H1 (cell line): ENCODE measurements at regions of chr1 and their contacts with region 1.

Region 1: GRCh38 chr1:17520071-17520813 is 19.3 kb upstream of the ARHGEF10L start:
- DNase-seq: no peak
- H3K4me3 ChIP-seq: no peak overlapping the region
- H3K27ac ChIP-seq: no peak overlapping the region
- H3K4me1 ChIP-seq: peaks cover 6 to 33% (median 23%) of the 10 kb centered on the region in 4 experiments
- H3K27me3 ChIP-seq: no peaks in the 10 kb centered on the region
- CTCF ChIP-seq: no peak
- EP300 ChIP-seq: no peak
- POLR2A ChIP-seq: no peak
- RAD21 ChIP-seq: no peak

Region 2: GRCh38 chr1:17507916-17508315 is 12.3 kb before region 1 on chr1:
- CTCF ChIA-PET with region 1: interaction called, 58 read pairs
- POLR2A ChIA-PET with region 1: interaction called, 4 read pairs
- DNase-seq: no peak
- H3K4me3 ChIP-seq: no peak overlapping the region
- H3K27ac ChIP-seq: no peak overlapping the region
- H3K4me1 ChIP-seq: no peaks in the 10 kb centered on the region; a peak in 2 of 7 replicates
- H3K27me3 ChIP-seq: no peaks in the 10 kb centered on the region
- CTCF ChIP-seq: peak; percentile 34 to 69 (median 68)
- EP300 ChIP-seq: no peak
- POLR2A ChIP-seq: no peak
- RAD21 ChIP-seq: peak; percentile 31 to 51; a peak in 3 of 4 replicates

Region 3: GRCh38 chr1:17531682-17532487 is 11.6 kb after region 1 on chr1:
- CTCF ChIA-PET with region 1: interaction called, 1,640 read pairs
- POLR2A ChIA-PET with region 1: interaction called, 49 read pairs
- DNase-seq: no peak
- H3K4me3 ChIP-seq: no peak overlapping the region
- H3K27ac ChIP-seq: no peak overlapping the region
- H3K4me1 ChIP-seq: peaks cover 0 to 16% (median 10%) of the 10 kb centered on the region in 4 experiments; a peak in 5 of 7 replicates
- H3K27me3 ChIP-seq: no peaks in the 10 kb centered on the region
- CTCF ChIP-seq: no peak
- EP300 ChIP-seq: no peak
- POLR2A ChIP-seq: no peak
- RAD21 ChIP-seq: no peak

Region 4: DNA sequence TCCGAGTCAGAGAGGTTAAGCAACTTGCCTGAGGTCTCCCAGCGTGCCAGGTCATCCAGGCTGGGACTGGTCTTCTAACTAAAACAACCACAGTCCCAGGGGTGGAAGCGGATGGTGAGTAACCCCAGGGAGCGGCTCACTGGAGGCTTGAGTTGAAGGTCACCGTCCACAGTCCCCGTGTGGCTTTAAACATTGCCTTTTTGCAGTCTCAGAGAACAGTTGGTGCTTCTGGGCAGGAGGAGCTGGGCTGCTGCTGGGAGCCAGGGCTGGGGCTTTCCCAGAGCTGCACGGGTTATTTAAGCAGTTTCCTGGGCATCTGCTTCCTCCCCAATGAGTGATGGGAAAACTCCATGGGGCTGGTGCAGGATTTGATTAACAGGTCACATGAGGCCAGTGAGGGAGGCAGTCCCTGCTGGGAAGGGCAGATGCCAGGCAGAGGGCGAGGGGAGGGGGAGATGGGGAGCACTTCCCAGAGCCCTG is 31.6 kb after region 1 on chr1:
- CTCF ChIA-PET with region 1: interaction called, 1,640 read pairs
- POLR2A ChIA-PET with region 1: interaction called, 14 read pairs
- DNase-seq: no peak
- H3K4me3 ChIP-seq: peak overlapping the region in 2 of 4 experiments; percentile 7 to 44; a peak in 3 of 8 replicates
- H3K27ac ChIP-seq: no peak overlapping the region; the same call in 1 of the 2 replicates
- H3K4me1 ChIP-seq: peaks cover 18 to 50% (median 37%) of the 10 kb centered on the region in 4 experiments
- H3K27me3 ChIP-seq: no peaks in the 10 kb centered on the region
- CTCF ChIP-seq: no peak
- EP300 ChIP-seq: no peak
- POLR2A ChIP-seq: no peak; a peak in 1 of 3 replicates
- RAD21 ChIP-seq: no peak